ENCODE measurements at regions of chr15 and their contacts with region 1.

Region 1: DNA sequence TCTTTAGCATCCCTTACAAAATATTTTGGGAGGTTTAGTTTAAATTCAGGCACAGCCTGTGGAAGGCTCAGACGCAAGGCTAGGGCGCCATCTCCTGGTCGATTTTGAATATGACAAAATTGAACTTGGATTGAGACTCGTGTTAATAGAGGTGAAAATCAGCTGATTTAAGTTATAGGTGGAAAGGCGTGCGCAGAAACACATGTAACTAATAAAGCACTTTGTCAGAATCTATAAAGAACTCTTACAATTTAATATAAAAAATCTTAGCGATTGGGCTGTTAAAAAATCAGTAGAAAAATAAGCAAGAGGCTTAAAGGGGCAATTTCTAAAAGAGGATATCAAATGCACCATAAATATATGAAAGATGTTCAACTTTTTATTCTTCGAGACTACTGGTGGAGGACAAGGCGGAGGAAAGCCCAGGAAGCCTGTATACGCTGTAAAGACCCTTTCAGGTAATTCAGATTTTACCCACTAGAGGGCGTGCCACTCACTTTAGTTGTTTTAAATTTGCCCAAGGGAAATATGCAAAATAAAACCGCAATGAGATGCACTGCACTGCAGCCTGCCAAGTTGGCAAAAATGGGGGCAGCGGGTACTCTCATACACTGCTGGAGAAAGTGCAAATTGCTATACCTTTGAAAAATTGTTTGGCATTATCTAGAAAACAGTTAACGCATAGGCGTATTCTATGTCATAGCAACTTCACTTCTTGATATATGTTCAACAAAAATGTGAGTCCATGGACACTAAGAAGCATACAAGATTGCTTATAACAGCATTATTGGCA is 64.7 kb downstream of the SLC30A4 start:
- DNase-seq: peak; percentile 54
- ATAC-seq: peak; percentile 74 to 77

Region 2: DNA sequence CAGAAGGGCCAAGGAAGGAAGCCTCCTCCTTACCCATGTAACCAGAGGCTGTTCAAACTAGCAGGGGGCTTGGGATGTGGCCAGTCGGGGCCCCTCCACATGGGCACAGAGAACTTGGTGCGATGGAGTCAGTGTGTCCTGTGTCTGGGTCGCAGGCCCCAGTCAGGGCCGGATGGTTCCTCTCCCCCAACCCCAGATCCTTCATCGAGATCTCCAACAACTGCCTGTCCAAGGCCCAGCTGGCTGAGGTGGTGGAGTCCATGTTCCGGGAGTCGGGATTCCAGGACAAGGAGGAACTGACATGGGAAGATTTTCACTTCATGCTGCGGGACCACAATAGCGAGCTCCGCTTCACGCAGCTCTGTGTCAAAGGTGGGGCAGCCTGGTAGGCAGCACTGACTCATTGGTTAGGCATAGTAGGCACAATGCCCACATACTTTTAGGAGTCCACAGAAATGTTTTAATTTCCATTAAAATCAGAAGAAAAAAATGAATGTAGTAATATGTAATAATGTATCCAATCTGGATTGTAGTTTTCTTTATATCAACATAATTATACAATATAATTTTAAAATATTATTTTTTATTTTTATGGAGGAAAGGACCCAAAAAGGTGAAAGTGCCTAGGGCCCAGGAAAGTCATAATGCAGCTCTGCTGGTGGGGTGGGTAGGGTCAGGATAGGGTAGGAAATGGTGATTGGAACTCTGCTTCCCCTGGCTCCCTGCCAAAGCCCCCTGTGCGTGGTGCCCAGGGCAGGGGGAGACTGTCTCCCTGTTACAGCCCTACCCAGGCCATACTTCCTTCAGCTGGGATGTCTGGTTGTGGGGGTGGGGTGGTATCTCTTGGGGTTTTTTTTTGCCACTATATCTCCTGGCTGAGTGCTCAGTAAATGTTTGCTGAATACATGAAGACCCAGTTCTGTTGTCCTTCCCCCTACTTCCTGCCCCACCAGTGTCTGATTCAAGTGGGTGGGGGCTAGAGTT is 309.5 kb before region 1 on chr15:
- intact Hi-C with region 1: no loop called
- DNase-seq: no peak
- ATAC-seq: no peak

Region 3: GRCh38 chr15:45331972-45332371 is 125.9 kb before region 1 on chr15:
- intact Hi-C with region 1: no loop called
- DNase-seq: no peak
- ATAC-seq: peak in 1 of 2 donors; percentile 49

Region 4: GRCh38 chr15:45429974-45430792 is 27.7 kb before region 1 on chr15:
- intact Hi-C with region 1: loop called in 1 of 2 experiments (anchors 1 kb)
- DNase-seq: peak; percentile 75
- ATAC-seq: peak; percentile 89 to 90

Region 5: GRCh38 chr15:45611305-45611704 is 153.5 kb after region 1 on chr15:
- intact Hi-C with region 1: loop called (anchors 1 to 10 kb)
- DNase-seq: no peak
- ATAC-seq: no peak

Measured in left cardiac atrium (tissue), 4 donors.